GM12878 (cell line): ENCODE measurements at regions of chr20 and their contacts with region 1.

Region 1: DNA sequence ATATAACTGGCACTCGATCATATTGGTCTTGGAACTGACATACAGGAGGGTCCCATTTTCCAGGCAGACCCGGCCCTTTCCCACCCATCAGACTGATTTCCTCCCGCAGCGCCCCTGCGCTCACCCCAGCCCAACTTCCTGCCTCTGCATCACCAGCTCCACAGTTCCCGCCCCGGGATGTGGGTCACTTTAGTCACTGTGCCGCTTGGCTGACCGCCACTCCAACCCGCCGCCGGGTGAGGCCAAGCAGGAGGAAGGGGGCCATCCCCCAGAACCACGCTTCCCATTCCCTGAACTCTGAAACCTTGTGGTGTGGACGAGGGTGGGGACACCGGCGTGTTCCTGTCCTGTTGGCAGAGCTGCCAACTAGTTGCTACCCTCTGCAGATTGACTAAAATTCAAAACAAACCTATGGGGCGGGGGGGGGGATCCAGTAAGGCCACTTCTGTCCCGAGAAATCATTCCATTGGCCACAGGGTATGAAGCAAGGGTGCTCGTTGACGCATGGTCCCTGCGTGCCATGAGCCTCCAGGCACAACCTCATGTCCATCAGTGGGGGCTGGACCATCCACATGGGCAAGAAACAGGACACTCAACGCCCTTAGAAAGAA is 12.3 kb downstream of the TGM2 start:
- DNase-seq: no peak
- ATAC-seq: peak; percentile 68
- H3K4me3 ChIP-seq: peak overlapping the region; percentile 17; the same call in 1 of the 2 replicates
- H3K27ac ChIP-seq: peak overlapping the region; percentile 54
- H3K4me1 ChIP-seq: peaks cover 24% of the 10 kb centered on the region
- H3K27me3 ChIP-seq: no peaks in the 10 kb centered on the region
- CTCF ChIP-seq: no peak
- EP300 ChIP-seq: no peak
- POLR2A ChIP-seq: no peak
- RAD21 ChIP-seq: no peak

Region 2: GRCh38 chr20:38094373-38094891 is 58.3 kb before region 1 on chr20:
- CTCF ChIA-PET with region 1: interaction called, 6 read pairs
- POLR2A ChIA-PET with region 1: interaction called, 11 read pairs
- RAD21 ChIA-PET with region 1: interaction called, 10 read pairs
- SMC1A ChIA-PET with region 1: interaction called, 29 read pairs
- in situ Hi-C with region 1: no loop called
- intact Hi-C with region 1: loop called (anchors 2 kb)
- DNase-seq: peak; percentile 73
- ATAC-seq: peak; percentile 81
- H3K4me3 ChIP-seq: no peak overlapping the region
- H3K27ac ChIP-seq: peak overlapping the region; percentile 98
- H3K4me1 ChIP-seq: peaks cover 47% of the 10 kb centered on the region
- H3K27me3 ChIP-seq: no peaks in the 10 kb centered on the region
- CTCF ChIP-seq: no peak
- EP300 ChIP-seq: peak; percentile 88 to 93
- POLR2A ChIP-seq: no peak
- RAD21 ChIP-seq: no peak

Region 3: GRCh38 chr20:38242848-38243449 is 90.2 kb after region 1 on chr20:
- CTCF ChIA-PET with region 1: no interaction called
- POLR2A ChIA-PET with region 1: no interaction called
- RAD21 ChIA-PET with region 1: no interaction called
- SMC1A ChIA-PET with region 1: no interaction called
- in situ Hi-C with region 1: no loop called
- intact Hi-C with region 1: no loop called
- DNase-seq: no peak
- ATAC-seq: no peak
- H3K4me3 ChIP-seq: no peak overlapping the region
- H3K27ac ChIP-seq: no peak overlapping the region
- H3K4me1 ChIP-seq: no peaks in the 10 kb centered on the region
- H3K27me3 ChIP-seq: no peaks in the 10 kb centered on the region
- CTCF ChIP-seq: peak; percentile 29 to 43 (median 39); a peak in 4 of 6 replicates
- EP300 ChIP-seq: no peak
- POLR2A ChIP-seq: no peak
- RAD21 ChIP-seq: no peak

Region 4: DNA sequence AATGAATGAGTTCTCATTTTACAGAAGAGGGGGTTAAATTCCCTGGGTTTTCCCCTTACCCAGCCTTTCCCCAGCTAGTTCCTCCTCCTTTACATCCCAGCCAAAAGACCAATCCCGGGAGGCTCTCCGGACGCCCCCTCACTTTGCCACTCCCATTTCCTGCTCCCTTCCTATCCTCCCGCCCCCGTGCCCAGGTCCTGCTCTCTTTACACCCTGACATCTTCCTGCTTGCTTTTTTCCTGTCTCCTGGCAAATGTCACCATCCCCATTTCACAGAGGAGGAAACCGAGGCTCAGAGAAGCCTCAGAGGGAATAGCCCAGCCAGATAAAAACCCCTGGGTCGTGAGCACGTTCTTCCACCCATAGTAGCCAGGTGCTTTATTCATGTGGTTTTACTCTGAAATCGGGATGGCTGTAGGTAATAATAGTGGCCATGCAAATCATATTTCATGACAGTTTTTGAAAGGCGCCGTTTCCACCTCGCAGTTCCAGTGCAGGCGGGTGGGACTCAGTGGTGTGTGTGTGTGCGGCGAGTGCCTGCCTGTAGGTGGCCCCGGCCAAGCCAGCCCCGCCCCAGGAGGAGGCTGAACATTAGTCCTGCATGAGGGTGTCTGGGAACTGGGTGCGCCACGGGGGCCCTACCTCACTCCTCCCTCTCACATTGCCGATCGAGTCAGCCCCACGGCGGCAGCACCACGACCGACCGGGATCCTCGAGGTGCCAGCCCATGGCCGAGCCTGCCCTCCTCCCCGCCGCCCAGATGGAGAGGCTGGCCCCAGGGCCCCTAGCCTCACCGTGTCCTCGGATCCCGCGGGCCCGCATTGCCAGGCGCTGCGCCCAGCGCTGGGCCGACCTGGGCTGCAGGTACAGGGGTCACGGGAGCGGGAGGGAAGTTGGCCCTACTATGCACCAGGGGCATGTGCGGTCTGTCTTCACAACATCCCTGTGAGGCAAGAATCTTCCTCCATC is 448.8 kb after region 1 on chr20 and contains the start of gene ARHGAP40:
- CTCF ChIA-PET with region 1: no interaction called
- POLR2A ChIA-PET with region 1: no interaction called
- RAD21 ChIA-PET with region 1: no interaction called
- SMC1A ChIA-PET with region 1: no interaction called
- in situ Hi-C with region 1: no loop called
- intact Hi-C with region 1: no loop called
- DNase-seq: no peak
- ATAC-seq: peak; percentile 78
- H3K4me3 ChIP-seq: no peak within 1 kb of the TSS
- H3K27ac ChIP-seq: no peak within 1 kb of the TSS
- H3K4me1 ChIP-seq: no peaks in the 10 kb centered on the region
- H3K27me3 ChIP-seq: peaks cover 4 to 9% of the 10 kb centered on the region in 2 experiments
- CTCF ChIP-seq: no peak
- EP300 ChIP-seq: no peak
- POLR2A ChIP-seq: no peak
- RAD21 ChIP-seq: no peak
- polyA plus RNA-seq, gene ARHGAP40: not detected